Posterior cingulate gyrus (tissue), 11 donors: ENCODE measurements at regions of chr7 and their contacts with region 1.

Region 1: GRCh38 chr7:94449148-94449725 is 54.5 kb downstream of the COL1A2 start:
- DNase-seq: no peak

Region 2: GRCh38 chr7:94657771-94658693 is 208.8 kb after region 1 on chr7:
- intact Hi-C with region 1: loop called (anchors 5 kb)
- DNase-seq: peak; percentile 79 to 99 (median 90)

Region 3: GRCh38 chr7:95045236-95045923 is 596.1 kb after region 1 on chr7:
- intact Hi-C with region 1: loop called (anchors 2 kb)
- DNase-seq: peak in 6 of 10 donors; percentile 17 to 92 (median 56)

Region 4: DNA sequence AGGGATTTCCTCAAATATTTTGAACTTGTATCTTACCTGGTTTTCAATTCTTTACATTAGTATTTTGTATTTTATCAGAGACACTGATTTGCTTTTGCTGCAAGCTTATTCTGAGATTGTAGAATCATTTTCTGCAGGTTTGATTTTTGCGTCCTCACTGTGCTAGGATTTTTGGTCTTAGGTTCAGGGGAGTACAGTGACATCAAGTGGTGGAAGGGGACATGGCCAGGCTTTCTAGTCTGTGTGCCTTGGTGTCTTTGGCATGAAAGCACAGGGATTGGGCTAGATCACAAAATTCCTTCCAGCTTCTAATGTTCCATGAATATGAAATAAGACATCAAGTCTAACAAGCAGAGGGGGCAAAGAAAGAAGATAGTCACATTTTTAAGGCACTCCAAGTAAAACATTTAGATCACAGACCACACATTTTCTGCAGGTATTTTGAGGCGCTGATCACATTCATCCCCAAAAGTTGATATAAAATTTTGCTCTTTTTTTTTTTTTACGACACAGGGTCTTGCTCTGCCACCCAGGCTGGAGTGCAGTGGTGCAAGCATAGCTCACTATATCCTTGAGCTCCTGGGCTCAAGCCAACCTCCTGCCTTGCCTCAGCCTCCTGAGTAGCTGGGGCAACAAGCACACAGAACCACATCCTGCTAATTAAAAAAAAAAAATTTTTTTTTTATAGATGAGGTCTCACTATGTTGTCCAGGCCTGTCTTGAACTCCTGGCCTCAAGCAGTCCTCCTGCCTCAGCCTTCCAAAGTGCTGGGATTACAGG is 750.7 kb after region 1 on chr7:
- intact Hi-C with region 1: loop called (anchors 2 kb)
- DNase-seq: peak in 8 of 10 donors; percentile 31 to 91 (median 55)

Region 5: DNA sequence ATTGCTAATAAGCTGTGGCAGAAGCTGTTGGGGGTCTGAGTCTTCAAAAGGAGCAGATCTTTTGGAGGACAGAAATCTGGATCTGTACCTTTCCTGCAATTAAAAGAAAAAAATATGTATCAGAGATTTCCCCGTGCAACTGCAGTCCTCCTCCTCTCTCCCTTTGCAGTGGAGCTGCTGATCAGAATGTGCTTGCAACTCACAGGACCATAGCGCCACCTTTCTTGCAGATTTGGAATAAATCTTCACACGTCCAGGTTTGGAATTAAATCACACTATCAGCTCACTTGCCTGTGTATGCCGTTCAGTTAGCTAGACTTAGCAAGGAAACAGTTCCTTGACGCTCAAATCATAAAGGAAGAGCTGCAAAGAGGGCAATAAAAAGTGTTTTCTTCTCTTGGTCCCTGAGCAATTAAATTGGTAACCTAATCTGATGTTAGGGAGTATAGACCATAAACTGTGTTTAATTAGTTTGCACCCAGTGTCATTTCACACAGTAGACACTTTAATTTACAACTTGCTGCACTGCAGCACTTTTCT is 797.7 kb after region 1 on chr7:
- intact Hi-C with region 1: loop called (anchors 5 kb)
- DNase-seq: peak in 7 of 10 donors; percentile 17 to 90 (median 57)

Region 6: GRCh38 chr7:95476904-95477594 is 1027.8 kb after region 1 on chr7:
- intact Hi-C with region 1: loop called (anchors 5 kb)
- DNase-seq: peak in 8 of 10 donors; percentile 16 to 86 (median 69)

Region 7: GRCh38 chr7:95690367-95690947 is 1241.2 kb after region 1 on chr7:
- intact Hi-C with region 1: loop called (anchors 5 kb)
- DNase-seq: peak in 1 of 10 donors; percentile 34